ENCODE measurements at regions of chr10 and their contacts with region 1.

Region 1: GRCh38 chr10:95841661-95842498 is 65.9 kb upstream of the CC2D2B start:
- DNase-seq: peak in 2 of 5 donors; percentile 77 to 90
- H3K4me3 ChIP-seq: no peak overlapping the region
- H3K27ac ChIP-seq: peak overlapping the region in 1 of 2 donors; percentile 51
- H3K4me1 ChIP-seq: peaks cover 0 to 7% (median 0%) of the 10 kb centered on the region in 3 donors
- H3K27me3 ChIP-seq: no peaks in the 10 kb centered on the region
- CTCF ChIP-seq: peak; percentile 55

Region 2: GRCh38 chr10:95467162-95467599 is 374.7 kb before region 1 on chr10:
- intact Hi-C with region 1: no loop called
- DNase-seq: peak; percentile 67 to 86 (median 74)
- H3K4me3 ChIP-seq: no peak overlapping the region
- H3K27ac ChIP-seq: peak overlapping the region; percentile 17 to 34
- H3K4me1 ChIP-seq: peaks cover 0 to 9% (median 0%) of the 10 kb centered on the region in 3 donors
- H3K27me3 ChIP-seq: no peaks in the 10 kb centered on the region
- CTCF ChIP-seq: peak; percentile 12

Region 3: DNA sequence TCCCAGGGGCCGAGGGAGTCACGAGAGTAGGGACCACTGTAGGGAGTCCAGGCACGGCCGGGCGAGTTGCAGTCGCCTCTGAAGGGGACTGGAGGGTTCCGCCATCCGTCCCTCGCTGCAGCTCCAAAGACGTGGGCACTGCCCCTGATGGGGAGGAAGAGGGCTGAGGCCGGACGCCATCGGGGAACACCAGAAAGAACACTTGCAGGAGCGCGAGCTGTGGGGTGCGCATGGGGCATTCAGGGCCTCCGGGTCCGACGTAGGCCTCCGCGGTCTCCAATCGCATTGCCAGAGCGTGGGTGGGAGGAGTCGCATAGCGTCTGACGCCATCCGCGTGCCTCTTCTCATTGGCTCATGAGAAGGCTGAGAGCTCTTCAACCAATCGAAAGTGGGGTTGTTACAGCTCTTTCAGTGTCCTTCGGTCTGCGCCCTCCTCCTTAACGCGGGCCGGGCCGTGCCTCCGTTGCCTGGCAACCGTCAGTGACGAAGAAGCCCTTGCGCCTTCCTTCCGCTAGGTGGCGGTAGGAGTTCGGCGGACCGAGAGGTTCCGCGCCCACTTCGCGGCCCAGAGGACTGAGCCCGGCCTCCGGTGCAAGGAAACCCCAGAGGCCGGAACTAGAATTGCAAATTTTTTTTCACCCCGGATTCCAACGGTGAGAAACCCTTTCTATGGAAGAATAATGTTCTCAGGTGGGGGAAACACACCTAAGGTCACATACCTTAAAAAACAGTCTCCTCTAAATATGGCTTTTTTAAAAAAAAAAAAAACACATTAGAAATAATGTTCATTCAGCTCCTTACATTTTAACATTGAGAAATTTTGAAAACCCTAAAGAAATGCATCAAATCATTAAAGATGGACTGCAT is 148.0 kb before region 1 on chr10 and contains the start of gene TCTN3:
- intact Hi-C with region 1: loop called (anchors 10 kb)
- DNase-seq: peak; percentile 98 to 100 (median 99)
- H3K4me3 ChIP-seq: peak within 1 kb of the TSS; percentile 93 to 99 (median 95)
- H3K27ac ChIP-seq: peak within 1 kb of the TSS; percentile 62 to 84
- H3K4me1 ChIP-seq: peaks cover 0 to 11% (median 0%) of the 10 kb centered on the region in 3 donors
- H3K27me3 ChIP-seq: no peaks in the 10 kb centered on the region
- CTCF ChIP-seq: peak; percentile 99
- total RNA-seq, gene TCTN3: 46.3 TPM

Measured in kidney (tissue), 22 donors.